ENCODE measurements at regions of chr4 and their contacts with region 1.

Region 1: GRCh38 chr4:39638354-39639240 is at the start of gene SMIM14:
- DNase-seq: peak; percentile 93 to 94
- H3K4me3 ChIP-seq: peak within 1 kb of the TSS; percentile 76 to 89 (median 85)
- H3K27ac ChIP-seq: peak within 1 kb of the TSS; percentile 98
- H3K4me1 ChIP-seq: peaks cover 2 to 19% (median 13%) of the 10 kb centered on the region in 4 experiments; a peak in 6 of 7 replicates
- H3K27me3 ChIP-seq: no peaks in the 10 kb centered on the region
- CTCF ChIP-seq: peak in 1 of 3 experiments; percentile 19; a peak in 1 of 4 replicates
- EP300 ChIP-seq: no peak
- POLR2A ChIP-seq: peak; percentile 71 to 95
- RAD21 ChIP-seq: peak in 1 of 2 experiments; percentile 15; a peak in 1 of 4 replicates
- total RNA-seq, gene SMIM14: 26.6 and 29.1 TPM in 2 replicates

Region 2: DNA sequence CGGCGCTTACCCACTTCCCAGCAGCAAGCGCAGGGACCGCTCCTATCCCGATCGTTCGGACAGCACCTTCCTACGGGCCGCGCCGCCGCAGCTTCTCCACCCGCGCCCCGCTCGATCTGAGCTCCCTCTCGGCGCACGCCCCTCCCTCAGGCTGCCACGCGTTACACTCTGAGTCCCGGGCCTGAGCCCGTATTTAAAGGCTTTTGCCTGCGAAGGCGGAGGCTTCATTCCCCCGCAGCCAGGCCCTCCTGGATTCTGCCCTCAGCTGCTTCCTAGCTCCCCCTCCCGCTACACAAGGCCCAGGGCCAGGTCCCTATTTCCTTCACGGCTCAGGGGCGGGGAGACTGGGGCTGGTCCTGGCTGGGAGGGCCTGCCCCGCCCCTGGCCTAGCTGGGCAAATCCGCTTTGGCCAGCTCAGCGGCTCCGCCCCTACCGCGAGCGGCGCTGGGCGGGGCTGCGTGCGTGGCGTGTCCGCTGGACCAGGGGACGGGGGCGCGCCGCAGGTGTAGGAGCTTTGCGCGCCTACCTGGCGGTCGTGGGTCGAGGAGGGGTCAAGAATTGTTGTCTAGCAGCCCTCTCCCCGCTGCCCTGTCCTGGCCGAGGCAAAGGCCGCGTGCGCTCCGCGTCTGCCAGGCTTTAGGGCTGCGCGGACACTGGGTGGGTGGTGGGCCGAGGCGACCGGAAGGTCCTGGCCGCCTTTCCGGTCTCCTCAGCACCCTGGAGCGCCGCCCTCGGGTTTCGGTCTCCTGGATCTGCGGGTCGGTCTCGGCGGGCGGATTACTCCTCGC is 111.1 kb before region 1 on chr4 and contains the start of gene UGDH:
- CTCF ChIA-PET with region 1: no interaction called
- POLR2A ChIA-PET with region 1: interaction called, 31 read pairs
- DNase-seq: peak; percentile 87 to 95
- H3K4me3 ChIP-seq: peak within 1 kb of the TSS; percentile 90 to 98 (median 95)
- H3K27ac ChIP-seq: peak within 1 kb of the TSS; percentile 93
- H3K4me1 ChIP-seq: peaks cover 0 to 4% (median 1%) of the 10 kb centered on the region in 4 experiments; a peak in 3 of 7 replicates
- H3K27me3 ChIP-seq: no peaks in the 10 kb centered on the region
- CTCF ChIP-seq: no peak
- EP300 ChIP-seq: no peak; a peak in 1 of 3 replicates
- POLR2A ChIP-seq: peak; percentile 63 to 89
- RAD21 ChIP-seq: no peak
- total RNA-seq, gene UGDH: 126 and 128 TPM in 2 replicates

Region 3: DNA sequence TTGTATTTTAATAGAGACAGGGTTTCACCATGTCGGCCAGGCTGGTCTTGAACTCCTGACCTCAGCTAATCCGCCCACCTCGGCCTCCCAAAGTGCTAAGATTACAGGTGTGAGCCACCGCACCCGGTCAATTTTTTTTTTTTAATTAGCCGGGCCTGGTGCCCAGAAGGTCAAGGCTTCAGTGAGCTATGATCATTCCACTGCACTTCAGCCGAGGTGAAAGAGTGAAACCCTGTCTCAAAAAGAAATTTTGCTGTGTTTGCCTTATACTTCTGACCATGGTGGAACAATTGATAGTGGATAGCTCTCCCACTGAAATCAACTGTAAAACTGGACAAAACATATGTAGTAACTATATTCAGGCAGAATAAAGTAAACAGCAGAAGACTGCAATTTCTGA is 24.1 kb after region 1 on chr4:
- CTCF ChIA-PET with region 1: interaction called, 3 read pairs
- POLR2A ChIA-PET with region 1: interaction called, 10 read pairs
- DNase-seq: no peak
- H3K4me3 ChIP-seq: no peak overlapping the region
- H3K27ac ChIP-seq: no peak overlapping the region
- H3K4me1 ChIP-seq: no peaks in the 10 kb centered on the region
- H3K27me3 ChIP-seq: no peaks in the 10 kb centered on the region
- CTCF ChIP-seq: no peak
- EP300 ChIP-seq: no peak
- POLR2A ChIP-seq: no peak
- RAD21 ChIP-seq: no peak

Region 4: GRCh38 chr4:39697740-39698423 is 59.3 kb after region 1 on chr4 and contains the start of gene UBE2K:
- CTCF ChIA-PET with region 1: interaction called, 3 read pairs
- POLR2A ChIA-PET with region 1: interaction called, 34 read pairs
- DNase-seq: peak; percentile 63 to 92
- H3K4me3 ChIP-seq: peak within 1 kb of the TSS; percentile 82 to 95 (median 94)
- H3K27ac ChIP-seq: peak within 1 kb of the TSS; percentile 96
- H3K4me1 ChIP-seq: peaks cover 0 to 9% (median 4%) of the 10 kb centered on the region in 4 experiments; a peak in 3 of 7 replicates
- H3K27me3 ChIP-seq: no peaks in the 10 kb centered on the region
- CTCF ChIP-seq: peak in 1 of 3 experiments; percentile 12; a peak in 1 of 4 replicates
- EP300 ChIP-seq: no peak
- POLR2A ChIP-seq: peak; percentile 69 to 95
- RAD21 ChIP-seq: peak in 1 of 2 experiments; percentile 8; a peak in 1 of 4 replicates
- total RNA-seq, gene UBE2K: 169 and 174 TPM in 2 replicates